ENCODE measurements at regions of chr13 and their contacts with region 1.

Region 1: DNA sequence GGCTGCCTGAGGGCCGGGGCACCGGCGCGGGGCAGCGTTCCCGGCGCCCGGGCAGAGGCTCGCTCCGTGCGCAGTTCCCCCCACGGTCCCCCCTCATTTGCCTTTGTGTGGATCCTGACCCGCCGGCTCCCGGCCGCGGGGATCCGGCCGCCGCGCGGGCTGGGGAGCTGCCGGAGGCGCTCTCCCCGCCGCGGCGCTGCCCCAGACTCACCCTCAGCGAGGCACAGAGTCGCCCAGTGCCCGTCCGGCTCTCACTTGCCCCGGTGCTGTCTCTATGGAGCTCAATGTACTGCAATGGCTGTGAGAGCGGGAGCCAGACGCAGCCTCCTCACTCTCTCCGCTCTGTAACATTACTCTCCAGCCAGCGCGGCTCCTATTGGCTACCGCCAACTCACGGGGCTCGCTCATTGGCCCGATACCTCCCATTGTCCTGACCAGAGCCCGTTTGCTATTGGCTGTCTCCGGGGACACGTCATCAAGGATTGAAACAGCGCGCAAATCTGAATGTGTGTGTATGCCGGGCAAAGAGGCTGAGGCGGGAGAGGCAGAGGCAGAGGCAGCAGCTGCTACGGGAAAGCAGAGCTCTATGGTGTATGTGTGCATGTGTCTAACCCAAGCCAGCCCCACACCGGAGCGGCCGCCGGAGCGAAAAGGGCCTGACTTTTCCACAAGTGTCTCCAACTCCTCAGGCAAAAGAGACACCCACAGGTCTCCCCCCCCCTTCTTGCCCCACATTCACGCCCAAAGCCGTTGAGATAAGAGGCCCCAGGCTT is at the start of gene HMGB1:
- DNase-seq: peak; percentile 97 to 99 (median 99)
- H3K4me3 ChIP-seq: peak within 1 kb of the TSS; percentile 77 to 92 (median 86)
- H3K27ac ChIP-seq: peak within 1 kb of the TSS; percentile 89 to 96
- H3K4me1 ChIP-seq: peaks cover 29 to 44% (median 35%) of the 10 kb centered on the region in 4 experiments
- H3K27me3 ChIP-seq: no peaks in the 10 kb centered on the region

Region 2: DNA sequence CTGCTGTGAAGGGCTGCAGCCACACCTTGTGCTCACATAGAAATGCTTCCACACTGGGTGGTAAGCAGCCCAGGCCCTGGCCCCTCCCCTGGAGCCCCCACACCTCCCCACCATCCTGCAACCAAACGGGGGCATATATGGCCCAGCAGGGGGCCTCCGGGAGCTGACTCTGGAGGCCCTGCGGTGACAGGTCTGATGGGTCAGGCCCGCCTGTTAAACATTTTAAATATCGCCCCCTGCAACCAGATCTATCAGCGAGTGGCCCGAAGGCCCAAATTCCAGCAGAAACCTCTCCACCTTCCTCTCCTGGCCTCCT is 110.4 kb before region 1 on chr13:
- CTCF ChIA-PET with region 1: interaction called, 18 read pairs
- POLR2A ChIA-PET with region 1: no interaction called
- DNase-seq: peak; percentile 81 to 84 (median 84)
- H3K4me3 ChIP-seq: peak overlapping the region in 1 of 7 experiments; percentile 8
- H3K27ac ChIP-seq: no peak overlapping the region
- H3K4me1 ChIP-seq: peaks cover 1 to 18% (median 14%) of the 10 kb centered on the region in 4 experiments
- H3K27me3 ChIP-seq: no peaks in the 10 kb centered on the region

Region 3: DNA sequence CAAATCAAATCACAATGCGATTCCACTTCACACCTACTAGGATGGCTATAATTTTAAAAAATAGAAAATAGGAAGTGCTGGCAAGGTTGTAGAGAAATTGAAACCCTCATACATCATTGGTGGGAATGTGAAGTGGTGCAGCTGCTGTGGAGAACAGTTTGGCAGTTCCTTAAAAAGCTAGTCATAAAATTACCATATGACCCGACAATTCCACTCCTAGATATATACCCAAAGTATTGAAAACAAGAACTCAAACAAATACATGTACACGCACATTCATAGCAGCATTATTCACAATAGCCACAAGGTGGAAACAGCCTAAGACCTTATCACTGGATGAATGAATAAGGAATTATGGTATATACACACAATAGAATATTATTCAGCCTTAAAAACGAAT is 12.0 kb before region 1 on chr13:
- CTCF ChIA-PET with region 1: interaction called, 11 read pairs
- POLR2A ChIA-PET with region 1: no interaction called
- DNase-seq: peak; percentile 23 to 84 (median 68)
- H3K4me3 ChIP-seq: no peak overlapping the region
- H3K27ac ChIP-seq: no peak overlapping the region
- H3K4me1 ChIP-seq: no peaks in the 10 kb centered on the region
- H3K27me3 ChIP-seq: no peaks in the 10 kb centered on the region